Aorta (tissue), 5 donors: ENCODE measurements at regions of chr6 and their contacts with region 1.

Region 1: GRCh38 chr6:139323511-139324300 is 31.9 kb upstream of the TXLNB start:
- DNase-seq: peak; percentile 77 to 88
- ATAC-seq: peak; percentile 79
- H3K4me3 ChIP-seq: no peak overlapping the region
- H3K27ac ChIP-seq: no peak overlapping the region
- H3K4me1 ChIP-seq: no peaks in the 10 kb centered on the region
- H3K27me3 ChIP-seq: no peaks in the 10 kb centered on the region

Region 2: GRCh38 chr6:138970856-138971425 is 352.8 kb before region 1 on chr6:
- intact Hi-C with region 1: no loop called
- DNase-seq: no peak
- ATAC-seq: peak; percentile 55
- H3K4me3 ChIP-seq: no peak overlapping the region
- H3K27ac ChIP-seq: no peak overlapping the region
- H3K4me1 ChIP-seq: peaks cover 0 to 7% of the 10 kb centered on the region in 2 donors
- H3K27me3 ChIP-seq: no peaks in the 10 kb centered on the region

Region 3: DNA sequence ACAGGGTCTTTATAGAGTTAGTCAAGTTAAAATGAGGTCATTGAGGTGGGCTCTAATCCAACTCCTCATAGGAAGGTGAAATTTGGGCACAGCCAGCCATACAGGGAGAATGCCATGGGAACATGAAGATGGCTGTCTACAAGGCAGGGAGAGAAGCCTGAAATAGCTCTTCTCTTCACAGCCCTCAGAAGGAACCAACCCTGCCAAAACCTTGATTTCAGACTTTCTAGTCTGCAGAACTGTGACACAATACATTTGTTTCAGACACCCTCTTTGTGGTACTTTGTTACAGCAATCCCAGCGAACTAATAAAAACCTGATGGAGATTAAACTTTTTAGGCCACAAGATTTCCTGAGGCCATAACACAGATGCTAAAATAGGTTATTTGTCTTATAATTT is 231.9 kb before region 1 on chr6:
- intact Hi-C with region 1: no loop called
- DNase-seq: no peak
- ATAC-seq: no peak
- H3K4me3 ChIP-seq: no peak overlapping the region
- H3K27ac ChIP-seq: no peak overlapping the region
- H3K4me1 ChIP-seq: no peaks in the 10 kb centered on the region
- H3K27me3 ChIP-seq: no peaks in the 10 kb centered on the region

Region 4: DNA sequence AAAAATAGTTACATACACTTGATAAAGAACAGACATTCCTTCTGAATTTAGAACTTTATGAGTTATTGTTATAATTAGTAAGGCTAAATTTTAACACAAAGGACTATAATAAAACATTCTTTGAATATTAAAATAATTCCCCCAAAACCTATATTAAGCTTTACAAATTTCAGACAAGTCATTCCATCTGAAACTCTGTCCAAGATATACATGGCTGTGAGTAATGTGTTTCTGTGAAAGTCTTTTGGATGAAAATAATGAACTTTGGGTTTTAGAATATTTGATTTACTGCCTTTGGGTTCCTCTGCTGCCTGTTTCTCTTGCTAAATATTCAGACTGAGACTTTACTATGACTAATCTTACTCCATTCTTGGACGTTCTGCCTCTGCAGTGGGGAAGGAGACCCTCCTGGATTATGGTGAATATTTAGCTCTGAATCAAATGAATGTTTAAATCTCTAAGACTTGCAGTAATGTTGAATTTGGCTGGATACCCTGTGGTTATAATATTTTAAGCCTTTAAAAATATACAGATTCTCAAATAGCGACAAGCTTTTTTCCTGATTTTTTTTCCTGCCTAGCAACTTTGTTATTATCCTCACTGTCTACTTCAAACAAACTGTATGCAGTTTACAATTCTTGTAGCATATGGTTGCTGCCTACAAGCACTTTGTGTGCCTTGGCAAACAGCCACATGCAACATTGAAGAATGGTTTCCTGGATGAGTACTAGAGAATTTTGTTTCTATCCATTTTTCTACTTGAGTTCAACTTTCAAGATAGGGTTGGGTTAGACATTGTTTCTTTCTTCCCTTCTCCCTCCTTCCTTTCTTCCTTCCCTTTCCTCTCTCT is 83.3 kb before region 1 on chr6:
- intact Hi-C with region 1: no loop called
- DNase-seq: no peak
- ATAC-seq: peak; percentile 68
- H3K4me3 ChIP-seq: no peak overlapping the region
- H3K27ac ChIP-seq: peak overlapping the region; percentile 76 to 80
- H3K4me1 ChIP-seq: peaks cover 0 to 10% of the 10 kb centered on the region in 2 donors
- H3K27me3 ChIP-seq: no peaks in the 10 kb centered on the region

Region 5: GRCh38 chr6:139295901-139296300 is 27.8 kb before region 1 on chr6:
- intact Hi-C with region 1: loop called in 1 of 2 experiments (anchors 2 kb)
- DNase-seq: peak in 1 of 2 donors; percentile 71
- ATAC-seq: no peak
- H3K4me3 ChIP-seq: no peak overlapping the region
- H3K27ac ChIP-seq: no peak overlapping the region
- H3K4me1 ChIP-seq: no peaks in the 10 kb centered on the region
- H3K27me3 ChIP-seq: no peaks in the 10 kb centered on the region